ENCODE measurements at regions of chr4 and their contacts with region 1.

Region 1: DNA sequence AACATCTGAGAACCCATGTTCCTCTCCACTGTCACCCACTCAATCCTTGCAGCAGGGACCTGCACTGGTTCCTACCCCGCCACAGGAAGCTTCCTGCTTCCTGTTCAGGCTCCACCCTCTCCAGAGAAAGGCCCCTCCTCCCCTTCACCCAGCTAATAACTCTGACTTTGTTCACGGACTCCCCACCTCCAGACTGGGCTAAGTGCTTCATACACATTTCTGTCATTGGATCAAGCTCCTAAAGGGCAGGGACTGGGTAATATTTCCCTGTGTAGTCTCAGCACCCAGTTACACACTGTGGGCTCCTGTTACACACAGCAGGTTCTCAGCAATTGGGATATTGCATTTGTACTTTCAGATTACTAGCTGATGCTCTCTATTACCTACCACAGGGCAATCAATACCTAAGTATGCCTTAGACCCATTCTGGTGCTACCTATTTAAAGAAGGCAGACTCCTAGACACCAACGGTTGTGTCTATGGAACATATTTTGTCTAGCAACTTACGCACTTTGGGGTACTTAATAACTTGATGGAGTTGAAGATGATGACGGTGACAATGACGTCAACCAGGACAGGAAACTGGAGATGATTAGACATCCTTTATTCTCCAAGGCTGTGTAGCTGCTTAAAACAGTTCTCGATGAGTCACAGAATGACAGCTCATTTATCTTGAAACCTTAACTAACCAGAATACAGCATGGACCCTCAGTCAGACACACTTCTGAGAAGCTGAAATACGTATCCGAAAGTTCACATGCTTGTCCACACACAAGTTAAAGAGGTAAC is 58.1 kb downstream of the MAML3 start:
- DNase-seq: peak; percentile 91
- H3K4me3 Mint-ChIP-seq: peak overlapping the region; percentile 90
- H3K27ac Mint-ChIP-seq: peak overlapping the region; percentile 99
- H3K4me1 Mint-ChIP-seq: peaks cover 77% of the 10 kb centered on the region
- H3K27me3 Mint-ChIP-seq: no peaks in the 10 kb centered on the region

Region 2: DNA sequence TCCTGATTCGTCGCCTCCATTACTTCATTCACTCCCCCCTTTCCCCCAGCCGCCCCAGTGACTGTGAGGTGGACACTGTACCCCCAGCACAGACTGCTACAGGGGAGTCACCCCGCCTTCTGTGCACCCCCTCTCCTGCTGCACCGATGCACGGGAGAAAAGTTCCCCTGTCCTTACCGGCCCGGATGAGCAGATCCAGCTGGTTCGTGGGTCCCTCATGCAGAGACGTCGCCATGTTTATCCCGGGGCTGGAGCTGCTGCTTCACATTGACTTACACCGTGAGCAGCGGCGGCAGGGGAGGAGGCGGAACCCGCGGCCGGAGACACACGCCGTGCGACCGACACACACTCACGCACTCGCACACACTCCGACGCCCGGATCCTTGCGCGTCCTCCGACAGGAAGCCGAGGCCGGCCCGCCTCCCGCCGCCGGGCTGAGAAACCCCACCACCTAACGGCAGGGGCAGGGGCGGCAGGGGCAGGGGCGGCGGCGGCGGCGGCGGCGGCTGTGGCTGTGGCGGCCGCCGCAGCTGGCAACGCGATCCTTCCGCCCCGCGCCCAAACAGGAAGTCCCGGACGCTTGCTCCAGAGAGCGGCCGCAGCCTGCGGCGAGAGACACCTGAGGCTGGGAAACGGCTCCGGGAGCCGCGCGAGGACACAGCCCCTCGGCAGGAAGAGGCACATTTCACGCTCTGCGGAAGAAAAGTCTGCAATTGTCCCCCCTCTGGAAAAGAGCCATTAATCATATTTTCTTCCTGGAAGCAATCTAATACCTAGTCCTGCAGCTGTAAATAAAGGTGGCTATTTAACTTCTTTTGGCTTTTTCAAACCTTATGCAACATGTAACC is 1011.7 kb before region 1 on chr4:
- CTCF ChIA-PET with region 1: no interaction called
- intact Hi-C with region 1: loop called (anchors 5 kb)
- DNase-seq: peak; percentile 90
- H3K4me3 Mint-ChIP-seq: peak overlapping the region; percentile 99
- H3K27ac Mint-ChIP-seq: peak overlapping the region; percentile 99
- H3K4me1 Mint-ChIP-seq: peaks cover 30% of the 10 kb centered on the region
- H3K27me3 Mint-ChIP-seq: no peaks in the 10 kb centered on the region

Region 3: GRCh38 chr4:139312552-139313332 is 783.1 kb before region 1 on chr4:
- CTCF ChIA-PET with region 1: no interaction called
- intact Hi-C with region 1: no loop called
- DNase-seq: no peak
- H3K4me3 Mint-ChIP-seq: no peak overlapping the region
- H3K27ac Mint-ChIP-seq: no peak overlapping the region
- H3K4me1 Mint-ChIP-seq: peaks cover 74% of the 10 kb centered on the region
- H3K27me3 Mint-ChIP-seq: no peaks in the 10 kb centered on the region

Region 4: DNA sequence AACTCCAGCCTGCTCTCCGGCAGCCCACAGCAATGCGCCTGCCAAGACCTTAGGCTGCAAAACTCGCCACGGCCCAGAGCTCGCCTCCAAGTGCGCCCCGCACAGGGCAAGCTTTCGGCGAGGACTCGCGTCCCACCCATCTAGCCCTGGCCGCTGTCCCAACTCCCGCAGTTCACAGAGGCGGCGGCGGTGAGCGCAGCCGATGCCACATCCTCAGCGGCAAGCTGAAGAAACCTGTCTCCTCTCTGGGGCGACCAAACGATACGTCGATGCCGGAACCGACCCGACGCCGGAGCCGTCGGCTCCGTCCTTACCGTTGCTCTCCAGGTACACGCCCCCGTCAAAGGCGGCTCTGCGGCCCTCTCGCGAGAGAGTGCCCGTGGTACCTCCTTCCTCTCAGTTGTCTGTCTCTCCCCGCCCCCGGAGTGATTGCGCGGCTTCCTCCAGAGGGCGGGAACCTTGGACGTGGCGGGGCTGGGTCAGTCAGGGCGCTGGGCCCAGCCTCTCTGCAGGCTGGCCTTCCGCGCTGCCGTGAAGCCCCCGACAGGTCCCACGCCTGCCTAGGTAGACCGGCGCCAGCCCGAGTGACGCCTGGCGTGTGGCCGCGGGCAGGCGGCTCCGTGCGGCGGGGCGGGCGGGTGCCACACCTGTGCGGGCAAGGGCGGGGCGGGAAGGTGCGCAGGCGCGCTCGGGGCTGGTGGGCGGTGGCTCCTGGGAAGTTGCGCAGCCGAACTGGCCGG is 642.3 kb before region 1 on chr4:
- CTCF ChIA-PET with region 1: no interaction called
- intact Hi-C with region 1: loop called (anchors 2 kb)
- DNase-seq: peak; percentile 98
- H3K4me3 Mint-ChIP-seq: peak overlapping the region; percentile 97
- H3K27ac Mint-ChIP-seq: peak overlapping the region; percentile 98
- H3K4me1 Mint-ChIP-seq: peaks cover 50% of the 10 kb centered on the region
- H3K27me3 Mint-ChIP-seq: no peaks in the 10 kb centered on the region

Region 5: DNA sequence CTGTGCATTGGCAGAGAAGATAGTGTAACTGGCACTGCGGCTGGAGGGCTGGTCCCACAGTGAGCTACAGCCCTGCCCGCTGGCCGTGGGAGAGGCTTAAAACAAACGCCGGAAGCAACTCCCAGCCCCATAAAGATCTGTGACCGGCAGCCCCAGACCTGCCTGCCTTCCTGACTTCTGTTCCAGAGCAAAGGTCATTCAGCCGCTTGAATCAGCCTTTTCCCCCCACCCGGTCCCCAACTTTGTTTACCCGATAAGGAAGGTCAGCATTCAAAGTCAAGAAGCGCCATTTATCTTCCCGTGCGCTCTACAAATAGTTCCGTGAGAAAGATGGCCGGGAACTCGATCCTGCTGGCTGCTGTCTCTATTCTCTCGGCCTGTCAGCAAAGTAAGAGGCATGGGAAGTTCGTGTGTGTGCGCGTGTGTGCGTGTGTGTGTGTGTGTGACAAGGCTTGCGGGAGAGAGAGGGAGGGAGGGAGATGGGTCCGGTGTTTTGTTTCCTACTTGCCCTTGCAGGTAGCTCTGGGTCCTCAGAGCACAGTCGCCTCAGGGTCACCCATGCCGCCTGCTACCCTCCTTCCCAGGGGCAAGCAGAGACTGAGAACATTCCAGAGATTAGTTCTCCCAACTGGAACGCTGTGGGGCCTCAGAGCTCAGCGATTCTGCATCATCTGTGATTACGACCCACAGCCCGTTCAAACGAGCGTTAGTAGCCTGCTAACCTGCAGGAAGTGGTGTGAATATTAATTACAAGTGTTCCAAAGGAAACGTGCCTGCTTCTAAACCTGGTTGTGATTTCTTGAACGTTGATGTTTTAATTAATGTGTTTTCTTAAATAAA is 430.0 kb before region 1 on chr4 and contains the start of gene MGST2:
- CTCF ChIA-PET with region 1: no interaction called
- intact Hi-C with region 1: no loop called
- DNase-seq: peak; percentile 48
- H3K4me3 Mint-ChIP-seq: peak within 1 kb of the TSS; percentile 77
- H3K27ac Mint-ChIP-seq: peak within 1 kb of the TSS; percentile 62
- H3K4me1 Mint-ChIP-seq: peaks cover 15% of the 10 kb centered on the region
- H3K27me3 Mint-ChIP-seq: no peaks in the 10 kb centered on the region
- total RNA-seq, gene MGST2: 5.4 to 6.2 TPM

Region 6: GRCh38 chr4:140071806-140072205 is 24.1 kb before region 1 on chr4:
- CTCF ChIA-PET with region 1: interaction called, 4 read pairs
- intact Hi-C with region 1: loop called (anchors 1 kb)
- DNase-seq: peak; percentile 89
- H3K4me3 Mint-ChIP-seq: peak overlapping the region; percentile 46
- H3K27ac Mint-ChIP-seq: peak overlapping the region; percentile 39
- H3K4me1 Mint-ChIP-seq: peaks cover 41% of the 10 kb centered on the region
- H3K27me3 Mint-ChIP-seq: no peaks in the 10 kb centered on the region

Region 7: GRCh38 chr4:140373328-140374129 is 277.6 kb after region 1 on chr4 and contains the start of gene SCOC:
- CTCF ChIA-PET with region 1: no interaction called
- intact Hi-C with region 1: loop called (anchors 1 kb)
- DNase-seq: peak; percentile 99
- H3K4me3 Mint-ChIP-seq: no peak within 1 kb of the TSS
- H3K27ac Mint-ChIP-seq: peak within 1 kb of the TSS; percentile 69
- H3K4me1 Mint-ChIP-seq: peaks cover 33% of the 10 kb centered on the region
- H3K27me3 Mint-ChIP-seq: no peaks in the 10 kb centered on the region
- total RNA-seq, gene SCOC: 44.7 to 49.4 TPM

Region 8: DNA sequence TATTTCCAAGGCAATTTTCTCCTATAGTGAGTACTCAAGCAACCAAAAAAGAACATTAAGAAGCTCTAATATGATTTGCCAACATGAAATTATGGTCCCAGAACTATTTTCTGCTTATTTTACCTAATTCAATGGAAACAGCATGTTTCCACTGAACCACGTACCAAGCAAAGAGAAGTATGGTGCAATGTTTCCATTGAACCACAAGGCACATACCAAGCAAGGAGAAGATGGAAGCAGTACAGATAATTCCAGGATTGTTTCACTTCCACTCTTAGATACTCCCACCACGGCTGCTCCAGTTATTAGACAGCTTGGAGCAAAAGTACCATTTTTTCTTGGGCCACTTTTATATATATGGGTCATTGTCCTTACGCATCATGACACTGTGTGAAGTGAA is 872.5 kb after region 1 on chr4:
- CTCF ChIA-PET with region 1: no interaction called
- intact Hi-C with region 1: no loop called
- DNase-seq: no peak
- H3K4me3 Mint-ChIP-seq: no peak overlapping the region
- H3K27ac Mint-ChIP-seq: no peak overlapping the region
- H3K4me1 Mint-ChIP-seq: no peaks in the 10 kb centered on the region
- H3K27me3 Mint-ChIP-seq: no peaks in the 10 kb centered on the region

Measured in activated naive CD4-positive, alpha-beta T cell treated with anti-CD3 and anti-CD28 coated beads for 36 hours (primary cell).